Right ventricle myocardium inferior (tissue), 1 donor: ENCODE measurements at regions of chrX and their contacts with region 1.

Region 1: GRCh38 chrX:41333744-41334259 is at the start of gene DDX3X:
- DNase-seq: peak; percentile 89
- ATAC-seq: peak; percentile 90
- total RNA-seq, gene DDX3X: 123 TPM

Region 2: DNA sequence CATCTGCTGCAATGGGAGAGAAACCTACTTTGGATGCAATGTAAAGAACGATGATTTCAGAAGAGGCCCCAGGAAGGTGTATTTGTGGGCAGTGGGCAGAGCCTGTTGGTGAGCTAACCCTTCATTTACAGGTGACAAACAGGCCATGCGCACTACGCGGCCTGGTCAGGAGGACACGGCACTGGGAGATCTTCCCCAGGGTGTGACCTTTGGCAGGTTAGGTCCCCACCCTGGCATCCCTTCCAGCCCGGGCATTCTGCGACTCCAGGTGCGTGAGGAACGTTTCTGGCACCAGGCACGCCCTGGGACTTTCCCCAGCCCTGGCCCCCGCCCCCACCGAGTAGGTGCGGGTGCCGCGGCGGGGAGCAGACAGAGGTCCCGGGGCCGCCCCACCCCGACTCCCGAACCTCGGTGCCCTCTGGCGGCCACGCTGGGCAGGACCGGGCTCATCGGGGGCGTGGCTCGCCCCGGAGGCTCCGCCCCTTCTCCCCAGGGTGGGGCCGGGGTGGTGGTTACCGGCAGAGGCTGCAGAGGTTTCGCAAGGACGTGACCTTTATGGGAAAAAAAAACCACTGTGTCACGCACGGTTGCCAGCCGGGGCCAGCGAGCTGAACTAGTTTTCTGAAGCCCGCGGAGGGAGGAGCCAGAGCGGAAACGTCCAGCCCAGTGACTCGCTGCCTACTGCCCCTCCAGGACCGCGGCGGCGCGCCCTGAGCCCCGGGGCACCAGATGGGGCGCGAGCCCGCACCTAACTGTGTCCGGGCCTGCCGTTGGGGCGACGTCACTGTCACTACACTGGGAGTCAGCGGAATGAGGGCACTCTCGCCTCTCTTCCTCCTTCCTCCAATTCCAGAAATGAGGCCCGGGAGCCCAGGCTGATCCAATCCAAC is 108.4 kb after region 1 on chrX:
- intact Hi-C with region 1: loop called (anchors 1 kb)
- DNase-seq: peak; percentile 93
- ATAC-seq: peak; percentile 97

Region 3: GRCh38 chrX:41457613-41458192 is 123.9 kb after region 1 on chrX:
- intact Hi-C with region 1: no loop called
- DNase-seq: no peak
- ATAC-seq: no peak